CD8-positive, alpha-beta T cell (primary cell): ENCODE measurements at regions of chr6 and their contacts with region 1.

Region 1: GRCh38 chr6:144215932-144216667 is 65.8 kb downstream of the STX11 start:
- DNase-seq: peak; percentile 85 to 97 (median 92)
- ATAC-seq: peak; percentile 85
- H3K4me3 ChIP-seq: peak overlapping the region; percentile 70 to 71
- H3K4me3 Mint-ChIP-seq: peak overlapping the region; percentile 95
- H3K27ac ChIP-seq: peak overlapping the region; percentile 82 to 86
- H3K27ac Mint-ChIP-seq: peak overlapping the region; percentile 100
- H3K4me1 ChIP-seq: peaks cover 27% of the 10 kb centered on the region
- H3K4me1 Mint-ChIP-seq: peaks cover 36% of the 10 kb centered on the region
- H3K27me3 ChIP-seq: no peaks in the 10 kb centered on the region
- H3K27me3 Mint-ChIP-seq: peaks cover 2% of the 10 kb centered on the region
- CTCF ChIP-seq: peak; percentile 64

Region 2: GRCh38 chr6:143842902-143843676 is 373.0 kb before region 1 on chr6 and contains the start of gene LTV1:
- CTCF ChIA-PET with region 1: no interaction called
- POLR2A ChIA-PET with region 1: no interaction called
- intact Hi-C with region 1: loop called (anchors 1 to 5 kb)
- DNase-seq: peak; percentile 82 to 96 (median 91)
- ATAC-seq: peak; percentile 96
- H3K4me3 ChIP-seq: peak within 1 kb of the TSS; percentile 96 to 99
- H3K4me3 Mint-ChIP-seq: peak within 1 kb of the TSS; percentile 96
- H3K27ac ChIP-seq: peak within 1 kb of the TSS; percentile 94 to 95
- H3K27ac Mint-ChIP-seq: peak within 1 kb of the TSS; percentile 98
- H3K4me1 ChIP-seq: peaks cover 6% of the 10 kb centered on the region
- H3K4me1 Mint-ChIP-seq: peaks cover 28% of the 10 kb centered on the region
- H3K27me3 ChIP-seq: no peaks in the 10 kb centered on the region
- H3K27me3 Mint-ChIP-seq: no peaks in the 10 kb centered on the region
- CTCF ChIP-seq: no peak
- total RNA-seq, gene LTV1: 31.7 to 33.4 TPM

Region 3: GRCh38 chr6:144104898-144105487 is 111.1 kb before region 1 on chr6:
- CTCF ChIA-PET with region 1: interaction called, 45 read pairs
- POLR2A ChIA-PET with region 1: interaction called, 3 read pairs
- intact Hi-C with region 1: loop called (anchors 1 kb)
- DNase-seq: peak in 5 of 9 experiments; percentile 16 to 83 (median 45)
- ATAC-seq: peak; percentile 78
- H3K4me3 ChIP-seq: no peak overlapping the region
- H3K4me3 Mint-ChIP-seq: no peak overlapping the region
- H3K27ac ChIP-seq: no peak overlapping the region
- H3K27ac Mint-ChIP-seq: no peak overlapping the region
- H3K4me1 ChIP-seq: no peaks in the 10 kb centered on the region
- H3K4me1 Mint-ChIP-seq: peaks cover 2% of the 10 kb centered on the region
- H3K27me3 ChIP-seq: no peaks in the 10 kb centered on the region
- H3K27me3 Mint-ChIP-seq: no peaks in the 10 kb centered on the region
- CTCF ChIP-seq: peak; percentile 79

Region 4: DNA sequence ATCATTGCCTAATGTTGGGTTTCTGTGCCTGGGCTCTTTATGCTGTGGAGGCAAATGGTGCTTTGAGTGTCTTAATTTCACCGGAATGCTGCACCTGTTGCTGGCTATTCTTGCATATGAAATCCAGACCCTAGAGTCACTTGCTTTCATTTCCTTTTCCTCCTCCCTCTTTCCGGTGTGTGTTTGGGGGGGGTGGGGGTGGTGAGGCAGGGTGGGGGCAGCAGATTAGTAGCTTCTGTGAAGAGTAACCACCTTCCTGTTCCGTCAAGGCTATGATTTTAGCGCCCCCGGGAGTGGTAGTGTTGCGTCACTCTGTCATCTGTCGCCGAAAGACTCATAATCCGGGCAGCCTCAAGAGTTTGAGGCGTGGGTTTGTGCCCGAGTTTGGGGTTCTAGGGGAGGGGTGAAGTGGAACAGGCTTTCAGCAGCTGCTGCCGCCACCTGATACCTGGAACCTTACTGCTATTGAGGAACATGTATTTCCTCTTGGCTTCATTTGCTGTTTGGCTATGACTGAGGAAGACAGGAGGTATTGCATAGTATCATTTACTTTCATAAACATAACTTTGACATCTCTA is 118.1 kb after region 1 on chr6:
- CTCF ChIA-PET with region 1: no interaction called
- POLR2A ChIA-PET with region 1: no interaction called
- intact Hi-C with region 1: loop called in 1 of 2 experiments (anchors 5 kb)
- DNase-seq: peak; percentile 42 to 94 (median 78)
- ATAC-seq: peak; percentile 93
- H3K4me3 ChIP-seq: peak overlapping the region; percentile 51 to 52
- H3K4me3 Mint-ChIP-seq: peak overlapping the region; percentile 86
- H3K27ac ChIP-seq: peak overlapping the region; percentile 65 to 90
- H3K27ac Mint-ChIP-seq: peak overlapping the region; percentile 98
- H3K4me1 ChIP-seq: peaks cover 47% of the 10 kb centered on the region
- H3K4me1 Mint-ChIP-seq: peaks cover 53% of the 10 kb centered on the region
- H3K27me3 ChIP-seq: no peaks in the 10 kb centered on the region
- H3K27me3 Mint-ChIP-seq: no peaks in the 10 kb centered on the region
- CTCF ChIP-seq: no peak

Region 5: DNA sequence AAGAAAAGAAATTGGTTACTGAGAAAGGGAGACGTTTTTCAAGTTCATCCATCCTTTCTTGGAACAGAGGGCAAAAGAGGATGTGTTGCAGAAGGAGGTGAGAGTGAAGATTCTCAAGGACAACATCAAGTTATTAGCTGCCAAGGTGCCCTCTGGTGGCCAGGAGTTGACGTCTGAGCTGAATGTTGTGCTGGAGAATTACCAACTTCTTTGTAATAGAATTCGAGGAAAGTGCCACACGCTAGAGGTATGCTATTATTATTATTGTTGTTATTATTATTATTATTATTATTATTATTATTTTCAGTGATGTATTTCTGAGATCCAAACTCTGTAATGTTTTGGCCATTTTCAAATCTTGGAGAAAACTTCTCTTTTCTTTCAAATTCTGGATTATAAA is 266.0 kb after region 1 on chr6:
- CTCF ChIA-PET with region 1: interaction called, 4 read pairs
- POLR2A ChIA-PET with region 1: no interaction called
- intact Hi-C with region 1: loop called (anchors 1 to 2 kb)
- DNase-seq: peak; percentile 49 to 80 (median 75)
- ATAC-seq: peak; percentile 77
- H3K4me3 ChIP-seq: no peak overlapping the region
- H3K4me3 Mint-ChIP-seq: no peak overlapping the region
- H3K27ac ChIP-seq: no peak overlapping the region
- H3K27ac Mint-ChIP-seq: no peak overlapping the region
- H3K4me1 ChIP-seq: no peaks in the 10 kb centered on the region
- H3K4me1 Mint-ChIP-seq: peaks cover 3% of the 10 kb centered on the region
- H3K27me3 ChIP-seq: no peaks in the 10 kb centered on the region
- H3K27me3 Mint-ChIP-seq: no peaks in the 10 kb centered on the region
- CTCF ChIP-seq: peak; percentile 80

Region 6: GRCh38 chr6:144867761-144868160 is 651.7 kb after region 1 on chr6:
- CTCF ChIA-PET with region 1: no interaction called
- POLR2A ChIA-PET with region 1: no interaction called
- intact Hi-C with region 1: no loop called
- DNase-seq: no peak
- ATAC-seq: no peak
- H3K4me3 ChIP-seq: no peak overlapping the region
- H3K4me3 Mint-ChIP-seq: no peak overlapping the region
- H3K27ac ChIP-seq: no peak overlapping the region
- H3K27ac Mint-ChIP-seq: no peak overlapping the region
- H3K4me1 ChIP-seq: no peaks in the 10 kb centered on the region
- H3K4me1 Mint-ChIP-seq: peaks cover 3% of the 10 kb centered on the region
- H3K27me3 ChIP-seq: no peaks in the 10 kb centered on the region
- H3K27me3 Mint-ChIP-seq: peaks cover 25% of the 10 kb centered on the region
- CTCF ChIP-seq: no peak